Left colon (tissue), 2 donors: ENCODE measurements at regions of chr19 and their contacts with region 1.

Region 1: GRCh38 chr19:19064811-19065745 is 1.3 kb downstream of the SLC25A42 start:
- DNase-seq: peak; percentile 36 to 41
- ATAC-seq: no peak

Region 2: DNA sequence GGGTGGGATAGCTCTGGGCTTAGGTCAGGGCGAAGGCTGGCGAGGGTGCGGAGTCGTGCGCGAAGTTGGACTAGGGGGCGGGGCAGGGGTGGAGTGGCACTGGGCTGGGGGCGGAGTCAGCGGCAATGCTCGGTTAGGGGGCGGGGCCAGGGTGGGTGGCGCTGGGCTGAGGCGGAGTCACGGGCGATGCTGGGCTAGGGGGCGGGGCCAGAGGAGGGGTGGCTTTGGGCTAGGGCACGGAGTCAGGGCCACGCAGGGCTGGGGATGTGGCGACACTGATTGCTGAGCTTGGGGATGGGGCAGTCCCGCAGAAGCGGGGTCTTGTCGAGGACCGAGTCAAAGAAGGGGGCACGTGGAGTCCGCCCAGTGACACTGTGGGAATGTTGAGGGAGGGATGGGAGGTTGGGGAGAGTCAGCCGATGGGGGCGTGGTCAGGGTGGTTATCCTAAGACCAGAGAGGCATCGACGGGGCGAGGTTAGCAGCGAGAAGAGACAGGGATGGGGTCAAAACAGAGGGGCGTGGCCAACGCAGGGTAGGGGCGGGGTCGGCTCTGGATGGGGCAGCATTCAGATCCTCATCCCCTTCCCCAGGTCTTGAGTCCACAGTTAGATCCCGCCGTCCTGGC is 132.7 kb before region 1 on chr19:
- intact Hi-C with region 1: no loop called
- DNase-seq: peak; percentile 81 to 92
- ATAC-seq: peak; percentile 95

Region 3: GRCh38 chr19:19138169-19138981 is 73.3 kb after region 1 on chr19 and contains the start of gene TMEM161A:
- intact Hi-C with region 1: loop called in 1 of 2 experiments (anchors 5 kb)
- DNase-seq: peak; percentile 96 to 98
- ATAC-seq: peak; percentile 99
- total RNA-seq, gene TMEM161A: 16.8 to 18.9 TPM